ENCODE measurements at regions of chr7 and their contacts with region 1.

Region 1: GRCh38 chr7:1086588-1087464 is 1.1 kb upstream of the GPER1 start:
- DNase-seq: peak; percentile 79 to 81
- ATAC-seq: peak; percentile 60 to 90 (median 73)
- H3K4me3 ChIP-seq: peak overlapping the region in 9 of 10 donors; percentile 32 to 63 (median 51)
- H3K27ac ChIP-seq: peak overlapping the region in 6 of 10 donors; percentile 3 to 71 (median 52)
- H3K4me1 ChIP-seq: peaks cover 12 to 50% (median 28%) of the 10 kb centered on the region in 9 donors
- H3K27me3 ChIP-seq: no peaks in the 10 kb centered on the region
- CTCF ChIP-seq: peak; percentile 91 to 96 (median 94)

Region 2: GRCh38 chr7:883055-884021 is 203.5 kb before region 1 on chr7:
- intact Hi-C with region 1: no loop called
- DNase-seq: peak in 1 of 2 donors; percentile 25
- ATAC-seq: peak in 6 of 8 donors; percentile 15 to 46 (median 34)
- H3K4me3 ChIP-seq: no peak overlapping the region
- H3K27ac ChIP-seq: peak overlapping the region in 4 of 10 donors; percentile 1 to 31 (median 22)
- H3K4me1 ChIP-seq: peaks cover 20 to 77% (median 53%) of the 10 kb centered on the region in 9 donors
- H3K27me3 ChIP-seq: no peaks in the 10 kb centered on the region
- CTCF ChIP-seq: peak in 3 of 9 donors; percentile 9 to 29 (median 18)

Region 3: DNA sequence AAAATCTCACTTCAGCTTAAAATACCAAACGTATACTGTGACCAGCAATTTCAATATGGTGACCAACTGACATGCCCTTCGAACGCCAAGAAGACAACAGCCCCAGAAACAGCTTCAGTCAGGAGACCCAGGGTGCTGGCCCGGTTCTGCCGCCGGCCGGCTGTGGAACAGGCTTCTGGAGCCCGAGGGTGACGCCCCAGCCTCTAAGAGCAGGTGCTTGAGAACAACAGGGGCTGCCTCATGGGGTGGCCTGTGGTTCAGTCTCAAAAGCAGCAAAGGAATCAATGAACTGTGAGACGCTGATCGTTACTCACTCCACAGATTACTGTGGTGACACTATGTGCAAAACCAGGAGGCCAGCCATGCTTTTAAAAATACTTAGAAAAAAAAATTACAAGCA is 18.4 kb after region 1 on chr7:
- intact Hi-C with region 1: loop called in 1 of 10 experiments (anchors 2 kb)
- DNase-seq: no peak
- ATAC-seq: no peak
- H3K4me3 ChIP-seq: no peak overlapping the region
- H3K27ac ChIP-seq: peak overlapping the region in 4 of 10 donors; percentile 4 to 56 (median 33)
- H3K4me1 ChIP-seq: peaks cover 0 to 33% (median 3%) of the 10 kb centered on the region in 9 donors
- H3K27me3 ChIP-seq: no peaks in the 10 kb centered on the region
- CTCF ChIP-seq: no peak

Region 4: DNA sequence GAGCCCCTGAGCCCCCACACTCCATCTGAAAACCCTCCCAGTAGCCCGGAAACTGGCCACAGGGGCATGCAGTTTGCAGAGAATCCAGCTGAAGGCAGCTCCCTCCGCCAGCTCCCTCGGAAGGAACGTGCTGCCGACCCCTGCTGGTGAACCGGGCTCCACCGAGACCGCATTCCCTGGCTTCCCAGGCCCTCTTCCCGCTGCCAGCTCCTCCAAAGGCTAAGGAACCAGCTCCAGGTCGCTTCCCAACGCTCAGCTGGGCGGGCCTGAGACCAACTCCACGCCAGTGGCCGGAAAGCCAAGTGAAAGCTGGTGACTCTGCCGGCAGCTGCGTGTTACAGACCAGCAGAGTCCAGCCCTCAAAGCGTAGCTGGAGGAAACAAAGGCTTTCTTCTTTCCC is 36.9 kb after region 1 on chr7:
- intact Hi-C with region 1: loop called in 5 of 10 experiments (anchors 1 to 5 kb)
- DNase-seq: peak; percentile 84 to 85
- ATAC-seq: peak; percentile 85 to 93 (median 90)
- H3K4me3 ChIP-seq: peak overlapping the region in 8 of 10 donors; percentile 6 to 51 (median 38)
- H3K27ac ChIP-seq: peak overlapping the region in 9 of 10 donors; percentile 59 to 82 (median 78)
- H3K4me1 ChIP-seq: peaks cover 0 to 38% (median 15%) of the 10 kb centered on the region in 9 donors
- H3K27me3 ChIP-seq: no peaks in the 10 kb centered on the region
- CTCF ChIP-seq: peak; percentile 50 to 78 (median 64)

Region 5: DNA sequence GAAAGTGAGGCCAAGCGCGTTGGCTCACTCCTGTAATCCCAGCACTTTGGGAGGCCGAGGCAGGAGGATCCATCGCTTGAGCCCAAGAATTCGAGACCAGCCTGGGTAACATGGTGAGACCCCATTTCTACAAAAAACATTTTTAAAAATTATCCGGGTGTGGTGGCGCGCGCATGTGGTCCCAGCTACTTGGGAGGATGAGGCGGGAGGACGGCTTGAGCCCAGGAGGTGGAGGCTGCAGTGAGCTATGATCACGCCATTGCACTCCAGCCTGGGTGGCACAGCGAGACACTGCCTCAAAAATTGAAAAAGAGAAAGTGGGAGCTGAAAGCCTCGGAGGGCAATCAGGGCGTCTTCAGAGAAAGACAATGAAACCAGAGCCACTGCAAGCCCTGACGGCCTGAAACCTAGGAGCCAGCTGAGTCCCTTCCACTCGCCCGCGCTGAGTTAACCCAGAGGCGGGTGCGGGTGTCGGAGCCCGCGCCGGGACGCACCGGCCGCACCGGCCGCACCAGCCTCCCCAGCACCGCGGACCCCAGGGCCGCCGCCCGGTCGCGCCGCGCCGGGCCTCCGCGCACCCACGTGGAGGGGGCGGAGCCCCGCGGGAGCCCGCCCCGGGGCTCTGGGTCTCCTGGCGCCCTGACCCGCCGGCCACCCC is 50.8 kb after region 1 on chr7:
- intact Hi-C with region 1: loop called in 7 of 10 experiments (anchors 5 to 10 kb)
- DNase-seq: no peak
- ATAC-seq: peak; percentile 53 to 89 (median 78)
- H3K4me3 ChIP-seq: peak overlapping the region; percentile 58 to 95 (median 74)
- H3K27ac ChIP-seq: peak overlapping the region in 9 of 10 donors; percentile 66 to 87 (median 75)
- H3K4me1 ChIP-seq: peaks cover 0 to 20% (median 16%) of the 10 kb centered on the region in 9 donors
- H3K27me3 ChIP-seq: no peaks in the 10 kb centered on the region
- CTCF ChIP-seq: no peak

Region 6: GRCh38 chr7:1144269-1144771 is 57.5 kb after region 1 on chr7:
- intact Hi-C with region 1: loop called in 7 of 10 experiments (anchors 5 to 10 kb)
- DNase-seq: peak; percentile 44 to 50
- ATAC-seq: peak; percentile 82 to 97 (median 92)
- H3K4me3 ChIP-seq: no peak overlapping the region
- H3K27ac ChIP-seq: peak overlapping the region in 2 of 10 donors; percentile 26 to 42
- H3K4me1 ChIP-seq: peaks cover 0 to 11% (median 0%) of the 10 kb centered on the region in 9 donors
- H3K27me3 ChIP-seq: no peaks in the 10 kb centered on the region
- CTCF ChIP-seq: peak in 7 of 9 donors; percentile 32 to 64 (median 52)

Region 7: DNA sequence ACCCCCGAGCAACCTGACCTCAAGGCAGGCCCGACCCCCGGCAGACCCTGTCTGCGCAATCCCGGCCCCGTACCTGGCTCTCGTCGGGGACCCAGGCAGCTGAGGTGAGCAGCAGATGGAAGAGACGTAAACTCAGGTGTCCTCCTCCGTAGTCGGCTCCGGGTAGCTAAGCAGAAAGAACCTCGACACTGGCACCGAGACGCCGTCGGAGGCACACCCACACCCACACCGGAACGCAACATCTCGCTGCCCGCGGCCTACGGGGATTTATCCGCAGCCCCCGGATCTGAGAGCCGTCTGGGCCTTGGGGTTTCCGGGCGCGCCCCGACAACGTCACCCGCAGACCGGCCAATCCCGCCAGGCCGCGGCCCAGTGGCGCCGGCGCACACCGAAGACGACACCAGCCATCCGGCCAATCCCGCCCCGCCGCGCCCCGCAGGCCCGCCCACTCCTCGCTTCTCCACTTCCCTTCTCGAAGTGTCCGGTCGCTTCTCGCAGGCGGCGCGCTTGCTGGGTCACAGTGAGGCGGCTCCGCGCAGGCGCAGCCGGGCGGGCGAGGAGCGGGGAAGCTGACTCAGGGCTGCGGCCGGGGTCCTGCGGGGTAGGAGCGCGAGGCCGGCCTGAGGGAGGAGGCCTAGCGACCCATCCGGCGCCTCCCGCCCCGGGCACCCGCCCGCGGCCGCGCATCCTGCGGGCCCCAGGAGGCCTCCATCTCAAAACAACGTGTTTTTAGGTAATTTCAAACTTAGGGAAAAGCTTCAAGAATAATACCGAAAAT is 73.3 kb after region 1 on chr7 and contains the start of gene ZFAND2A:
- intact Hi-C with region 1: loop called in 1 of 10 experiments (anchors 5 kb)
- DNase-seq: peak; percentile 99
- ATAC-seq: peak; percentile 98 to 100 (median 99)
- H3K4me3 ChIP-seq: peak within 1 kb of the TSS; percentile 58 to 100 (median 91)
- H3K27ac ChIP-seq: peak within 1 kb of the TSS; percentile 85 to 100 (median 98)
- H3K4me1 ChIP-seq: peaks cover 7 to 28% (median 22%) of the 10 kb centered on the region in 9 donors
- H3K27me3 ChIP-seq: no peaks in the 10 kb centered on the region
- CTCF ChIP-seq: peak in 1 of 9 donors; percentile 3
- total RNA-seq, gene ZFAND2A: 4.4 to 11.2 (median 7.7) TPM

Region 8: GRCh38 chr7:1175967-1176851 is 89.4 kb after region 1 on chr7:
- intact Hi-C with region 1: loop called in 3 of 10 experiments (anchors 2 to 10 kb)
- DNase-seq: peak; percentile 80 to 88
- ATAC-seq: peak; percentile 57 to 92 (median 82)
- H3K4me3 ChIP-seq: peak overlapping the region in 7 of 10 donors; percentile 17 to 38 (median 34)
- H3K27ac ChIP-seq: peak overlapping the region in 2 of 10 donors; percentile 39 to 65
- H3K4me1 ChIP-seq: peaks cover 0 to 17% (median 4%) of the 10 kb centered on the region in 9 donors
- H3K27me3 ChIP-seq: peaks cover 0 to 23% (median 0%) of the 10 kb centered on the region in 7 donors
- CTCF ChIP-seq: peak; percentile 79 to 94 (median 90)